ENCODE measurements at regions of chr20 and their contacts with region 1.

Region 1: GRCh38 chr20:58309575-58310290 is at the start of gene RAB22A:
- DNase-seq: peak; percentile 74 to 89 (median 84)
- ATAC-seq: peak; percentile 81
- H3K4me3 ChIP-seq: peak within 1 kb of the TSS; percentile 78
- H3K4me3 Mint-ChIP-seq: peak within 1 kb of the TSS; percentile 81 to 97 (median 92)
- H3K27ac ChIP-seq: peak within 1 kb of the TSS; percentile 99
- H3K27ac Mint-ChIP-seq: peak within 1 kb of the TSS; percentile 92 to 99 (median 97)
- H3K4me1 ChIP-seq: peaks cover 38 to 66% of the 10 kb centered on the region in 2 donors
- H3K4me1 Mint-ChIP-seq: peaks cover 23 to 84% (median 67%) of the 10 kb centered on the region in 7 donors
- H3K27me3 ChIP-seq: no peaks in the 10 kb centered on the region
- H3K27me3 Mint-ChIP-seq: no peaks in the 10 kb centered on the region
- total RNA-seq, gene RAB22A: 17.3 to 24.7 (median 17.8) TPM

Region 2: DNA sequence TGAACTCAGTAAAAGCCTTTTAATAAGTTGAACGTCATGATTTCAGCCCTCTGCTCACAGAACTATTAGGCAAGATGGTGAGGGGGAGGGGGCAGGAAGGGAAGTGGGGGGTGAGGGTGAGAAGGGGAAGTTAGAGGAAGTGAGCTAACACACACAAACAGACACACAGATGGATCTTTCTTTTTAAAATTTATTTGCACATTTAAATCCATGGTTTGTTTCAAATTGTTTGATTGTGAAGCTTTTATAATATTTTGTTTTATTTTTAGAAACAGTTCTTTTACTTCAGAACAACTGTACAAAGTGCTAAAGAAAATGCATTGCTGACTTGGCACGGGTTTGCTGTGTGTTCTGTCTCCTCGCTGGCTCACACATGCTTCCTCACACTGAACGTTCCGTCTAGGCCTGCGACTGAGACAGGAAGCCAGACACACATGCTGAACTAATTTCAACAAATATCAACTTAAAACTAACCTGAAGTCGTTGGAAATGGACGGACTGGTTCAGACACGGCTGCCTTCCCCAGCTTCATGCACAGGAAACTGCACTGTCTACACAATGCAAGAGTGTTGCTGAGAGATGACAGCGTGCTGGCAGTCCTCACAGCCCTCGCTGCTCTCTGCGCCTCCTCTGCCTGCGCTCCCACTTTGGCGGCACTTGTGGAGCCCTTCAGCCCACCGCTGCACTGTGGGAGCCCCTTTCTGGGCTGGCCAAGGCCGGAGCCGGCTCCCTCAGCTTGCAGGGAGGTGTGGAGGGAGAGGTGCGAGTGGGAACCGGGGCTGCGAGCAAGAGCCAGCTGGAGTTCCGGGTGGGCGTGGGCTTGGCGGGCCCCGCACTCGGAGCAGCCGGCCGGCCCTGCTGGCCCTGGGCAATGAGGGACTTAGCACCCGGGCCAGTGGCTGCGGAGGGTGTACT is 681.4 kb before region 1 on chr20:
- CTCF ChIA-PET with region 1: no interaction called
- POLR2A ChIA-PET with region 1: no interaction called
- intact Hi-C with region 1: loop called in 1 of 2 experiments (anchors 5 kb)
- DNase-seq: peak in 7 of 9 donors; percentile 62 to 81 (median 71)
- ATAC-seq: peak; percentile 88
- H3K4me3 ChIP-seq: peak overlapping the region; percentile 49
- H3K4me3 Mint-ChIP-seq: peak overlapping the region; percentile 85 to 97 (median 91)
- H3K27ac ChIP-seq: peak overlapping the region; percentile 83
- H3K27ac Mint-ChIP-seq: peak overlapping the region; percentile 92 to 100 (median 98)
- H3K4me1 ChIP-seq: peaks cover 41 to 51% of the 10 kb centered on the region in 2 donors
- H3K4me1 Mint-ChIP-seq: peaks cover 38 to 94% (median 80%) of the 10 kb centered on the region in 7 donors
- H3K27me3 ChIP-seq: no peaks in the 10 kb centered on the region
- H3K27me3 Mint-ChIP-seq: peaks cover 0 to 53% (median 0%) of the 10 kb centered on the region in 5 donors

Region 3: GRCh38 chr20:57879779-57880570 is 429.8 kb before region 1 on chr20:
- CTCF ChIA-PET with region 1: no interaction called
- POLR2A ChIA-PET with region 1: no interaction called
- intact Hi-C with region 1: no loop called
- DNase-seq: no peak
- ATAC-seq: no peak
- H3K4me3 ChIP-seq: no peak overlapping the region
- H3K4me3 Mint-ChIP-seq: no peak overlapping the region
- H3K27ac ChIP-seq: no peak overlapping the region
- H3K27ac Mint-ChIP-seq: no peak overlapping the region
- H3K4me1 ChIP-seq: no peaks in the 10 kb centered on the region
- H3K4me1 Mint-ChIP-seq: peaks cover 0 to 1% (median 0%) of the 10 kb centered on the region in 7 donors
- H3K27me3 ChIP-seq: no peaks in the 10 kb centered on the region
- H3K27me3 Mint-ChIP-seq: peaks cover 0 to 6% (median 0%) of the 10 kb centered on the region in 5 donors

Region 4: DNA sequence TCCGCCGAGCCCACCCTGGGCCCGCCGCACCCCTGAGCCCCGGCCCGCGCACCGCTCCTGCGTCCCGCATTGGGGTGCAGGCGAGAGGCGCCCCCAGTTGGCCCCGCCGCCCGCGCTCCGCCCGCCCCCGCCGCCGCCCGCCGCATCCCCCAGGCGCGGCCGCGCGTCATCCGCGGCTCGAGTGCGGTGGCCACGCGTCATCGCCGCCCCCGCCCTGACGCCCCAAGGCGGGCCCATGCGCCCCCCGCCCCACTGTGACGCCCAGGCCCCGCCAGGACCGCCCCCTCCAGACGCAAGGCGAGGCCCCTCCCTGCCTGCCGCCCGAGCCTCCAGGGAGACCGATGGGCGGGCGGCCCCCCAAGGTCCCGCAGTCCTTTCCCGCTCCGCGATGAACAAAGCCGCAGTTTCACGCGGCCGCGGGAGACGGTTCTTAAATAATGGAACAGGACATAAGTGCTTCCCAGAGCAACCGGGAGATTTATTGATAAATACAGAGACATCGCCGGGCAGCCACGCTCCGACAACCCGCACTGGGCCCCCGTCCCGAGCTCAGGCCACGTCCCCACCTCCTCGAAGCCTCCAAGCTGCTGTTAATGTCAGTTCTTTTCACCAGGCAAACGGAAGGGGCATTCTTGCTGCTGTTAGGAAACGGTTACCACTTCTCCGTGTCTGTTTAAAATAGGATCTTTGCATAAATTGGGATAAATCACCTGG is 81.1 kb before region 1 on chr20 and contains the start of gene ANKRD60:
- CTCF ChIA-PET with region 1: no interaction called
- POLR2A ChIA-PET with region 1: no interaction called
- intact Hi-C with region 1: no loop called
- DNase-seq: peak; percentile 53 to 81 (median 73)
- ATAC-seq: peak; percentile 96
- H3K4me3 ChIP-seq: no peak within 1 kb of the TSS
- H3K4me3 Mint-ChIP-seq: peak within 1 kb of the TSS; percentile 41 to 81 (median 66)
- H3K27ac ChIP-seq: peak within 1 kb of the TSS; percentile 25
- H3K27ac Mint-ChIP-seq: peak within 1 kb of the TSS in 7 of 9 donors; percentile 28 to 88 (median 86)
- H3K4me1 ChIP-seq: no peaks in the 10 kb centered on the region
- H3K4me1 Mint-ChIP-seq: peaks cover 5 to 21% (median 15%) of the 10 kb centered on the region in 7 donors
- H3K27me3 ChIP-seq: peaks cover 6 to 21% of the 10 kb centered on the region in 2 donors
- H3K27me3 Mint-ChIP-seq: peaks cover 51 to 59% (median 54%) of the 10 kb centered on the region in 5 donors
- total RNA-seq, gene ANKRD60: not detected

Region 5: GRCh38 chr20:58251921-58252591 is 57.7 kb before region 1 on chr20:
- CTCF ChIA-PET with region 1: no interaction called
- POLR2A ChIA-PET with region 1: interaction called, 5 read pairs
- intact Hi-C with region 1: loop called in 1 of 2 experiments (anchors 5 kb)
- DNase-seq: no peak
- ATAC-seq: no peak
- H3K4me3 ChIP-seq: no peak overlapping the region
- H3K4me3 Mint-ChIP-seq: peak overlapping the region in 2 of 10 donors; percentile 19 to 44
- H3K27ac ChIP-seq: no peak overlapping the region
- H3K27ac Mint-ChIP-seq: peak overlapping the region in 1 of 9 donors; percentile 15
- H3K4me1 ChIP-seq: no peaks in the 10 kb centered on the region
- H3K4me1 Mint-ChIP-seq: peaks cover 0 to 38% (median 25%) of the 10 kb centered on the region in 7 donors
- H3K27me3 ChIP-seq: no peaks in the 10 kb centered on the region
- H3K27me3 Mint-ChIP-seq: no peaks in the 10 kb centered on the region

Region 6: DNA sequence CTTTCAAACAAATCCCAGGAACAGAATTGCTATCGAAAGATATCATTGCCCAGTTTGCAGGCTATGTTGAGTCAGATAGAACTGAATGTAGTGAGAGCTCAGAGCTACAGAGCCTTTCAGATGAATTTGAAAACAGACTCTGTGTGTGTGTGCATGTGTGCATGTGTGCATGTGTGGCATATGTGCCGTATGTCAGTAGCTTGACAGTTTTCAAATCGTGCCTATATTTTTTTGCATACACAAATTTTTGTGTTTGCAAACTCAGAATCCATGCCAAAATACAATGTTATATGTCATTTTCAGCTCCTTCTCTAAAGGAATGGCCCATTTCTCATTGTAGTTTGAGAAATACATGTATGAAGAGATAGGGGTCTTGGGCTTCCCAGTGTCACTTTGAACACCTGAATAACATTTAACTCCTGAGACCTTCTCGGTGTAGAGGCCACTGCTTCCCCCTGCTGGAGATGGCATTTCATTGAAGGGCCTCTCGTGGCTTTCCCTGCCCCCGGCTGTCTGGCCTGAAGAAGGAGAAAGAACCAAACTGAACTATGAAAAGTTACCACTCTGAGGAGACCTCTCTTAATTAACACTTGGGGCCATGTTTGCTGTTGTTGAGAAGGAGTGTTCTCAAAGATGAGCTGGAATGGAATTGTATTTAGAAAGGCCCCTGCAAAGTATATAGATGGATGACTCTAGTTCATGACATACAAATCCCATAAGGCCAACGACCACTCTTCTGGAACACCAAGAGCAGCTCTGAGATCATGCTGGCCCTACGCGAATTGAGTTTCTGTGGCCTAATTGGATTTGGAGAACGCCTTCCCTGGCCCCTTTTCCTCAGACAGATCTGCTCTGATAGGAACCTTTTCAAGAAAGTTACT is 138.0 kb after region 1 on chr20:
- CTCF ChIA-PET with region 1: no interaction called
- POLR2A ChIA-PET with region 1: no interaction called
- intact Hi-C with region 1: loop called in 1 of 2 experiments (anchors 5 kb)
- DNase-seq: peak in 8 of 9 donors; percentile 19 to 63 (median 51)
- ATAC-seq: peak; percentile 67
- H3K4me3 ChIP-seq: no peak overlapping the region
- H3K4me3 Mint-ChIP-seq: no peak overlapping the region
- H3K27ac ChIP-seq: no peak overlapping the region
- H3K27ac Mint-ChIP-seq: peak overlapping the region in 4 of 9 donors; percentile 36 to 69 (median 52)
- H3K4me1 ChIP-seq: no peaks in the 10 kb centered on the region
- H3K4me1 Mint-ChIP-seq: peaks cover 0 to 12% (median under 1%) of the 10 kb centered on the region in 7 donors
- H3K27me3 ChIP-seq: no peaks in the 10 kb centered on the region
- H3K27me3 Mint-ChIP-seq: no peaks in the 10 kb centered on the region

Region 7: DNA sequence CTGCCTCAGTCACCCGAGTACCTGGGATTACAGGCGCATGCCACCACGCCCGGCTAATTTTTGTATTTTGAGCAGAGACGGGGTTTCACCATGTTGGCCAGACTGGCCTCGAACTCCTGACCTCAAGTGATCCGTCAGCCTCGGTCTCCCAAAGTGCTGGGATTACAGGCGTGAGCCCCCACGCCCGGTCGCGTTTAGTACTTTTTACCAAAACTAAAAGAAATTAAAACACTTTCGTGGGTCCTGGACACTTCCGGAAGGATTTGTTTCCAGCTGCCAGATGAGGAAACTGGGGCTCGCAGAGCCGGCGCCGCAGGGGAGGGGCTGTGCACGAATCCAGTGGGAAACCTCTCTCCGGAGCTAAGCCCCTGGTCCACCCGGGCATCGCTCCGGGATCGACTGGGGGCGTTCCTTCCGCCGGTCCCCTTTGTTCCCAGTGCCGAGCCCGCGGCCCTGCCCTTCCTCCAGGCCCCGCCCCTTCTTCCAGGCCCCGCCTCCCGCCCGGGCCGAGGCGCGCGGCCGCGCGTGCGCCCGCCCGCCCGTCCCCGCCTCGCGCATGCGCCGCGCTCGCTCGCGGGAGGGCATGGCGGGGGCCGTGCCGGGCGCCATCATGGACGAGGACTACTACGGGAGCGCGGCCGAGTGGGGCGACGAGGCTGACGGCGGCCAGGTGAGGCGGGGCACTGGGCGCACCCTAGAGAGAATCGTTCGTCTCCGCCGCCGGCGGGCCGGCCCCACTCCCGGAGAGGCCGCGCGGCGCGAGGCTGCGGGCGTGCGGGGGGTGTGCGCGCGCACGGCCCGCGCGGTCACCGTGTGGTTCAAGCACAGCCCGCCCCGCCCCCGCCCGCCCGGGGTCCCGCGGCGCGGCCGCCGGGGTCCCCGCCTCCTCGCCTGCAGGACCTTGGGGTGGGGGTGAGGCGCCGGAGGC is 671.2 kb after region 1 on chr20 and contains the start of gene NELFCD:
- CTCF ChIA-PET with region 1: no interaction called
- POLR2A ChIA-PET with region 1: no interaction called
- intact Hi-C with region 1: loop called in 1 of 2 experiments (anchors 5 kb)
- DNase-seq: peak; percentile 78 to 96 (median 88)
- ATAC-seq: peak; percentile 97
- H3K4me3 ChIP-seq: peak within 1 kb of the TSS; percentile 91
- H3K4me3 Mint-ChIP-seq: peak within 1 kb of the TSS; percentile 86 to 97 (median 94)
- H3K27ac ChIP-seq: peak within 1 kb of the TSS; percentile 88
- H3K27ac Mint-ChIP-seq: peak within 1 kb of the TSS; percentile 77 to 98 (median 90)
- H3K4me1 ChIP-seq: peaks cover 24% of the 10 kb centered on the region in 2 donors
- H3K4me1 Mint-ChIP-seq: peaks cover 26 to 41% (median 32%) of the 10 kb centered on the region in 7 donors
- H3K27me3 ChIP-seq: no peaks in the 10 kb centered on the region
- H3K27me3 Mint-ChIP-seq: peaks cover 0 to 9% (median 0%) of the 10 kb centered on the region in 5 donors
- total RNA-seq, gene NELFCD: 84.5 to 96.1 (median 90.8) TPM